PC-9 (cell line): ENCODE measurements at regions of chr6 and their contacts with region 1.

Region 1: GRCh38 chr6:26270903-26271667 is 93.9 kb upstream of the BTN3A2 start:
- DNase-seq: peak; percentile 65 to 80
- H3K4me3 ChIP-seq: peak overlapping the region; percentile 73
- H3K27ac ChIP-seq: peak overlapping the region; percentile 62
- H3K4me1 ChIP-seq: peaks cover 24% of the 10 kb centered on the region
- H3K27me3 ChIP-seq: no peaks in the 10 kb centered on the region
- CTCF ChIP-seq: no peak

Region 2: DNA sequence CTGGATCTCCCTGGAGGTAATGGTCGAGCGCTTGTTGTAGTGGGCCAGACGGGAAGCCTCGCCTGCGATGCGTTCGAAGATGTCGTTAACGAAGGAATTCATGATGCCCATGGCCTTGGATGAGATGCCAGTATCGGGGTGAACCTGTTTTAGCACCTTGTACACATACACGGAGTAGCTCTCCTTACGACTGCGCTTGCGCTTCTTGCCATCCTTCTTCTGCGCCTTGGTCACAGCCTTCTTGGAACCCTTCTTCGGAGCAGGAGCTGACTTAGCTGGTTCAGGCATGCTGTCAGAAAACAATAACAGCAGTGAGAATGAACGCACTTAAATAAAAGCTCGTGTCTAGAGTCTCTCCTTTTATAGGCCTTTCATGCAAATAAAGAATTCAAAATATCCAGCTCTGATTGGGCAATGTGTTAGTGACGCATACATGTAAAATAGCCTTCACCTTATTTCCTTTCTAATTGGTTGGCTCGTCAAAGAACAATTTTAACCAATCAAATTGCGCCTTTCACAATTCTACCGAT is 54.7 kb before region 1 on chr6:
- CTCF ChIA-PET with region 1: no interaction called
- POLR2A ChIA-PET with region 1: interaction called, 134 read pairs
- intact Hi-C with region 1: loop called (anchors 1 kb)
- DNase-seq: peak; percentile 65 to 95
- H3K4me3 ChIP-seq: peak overlapping the region; percentile 72
- H3K27ac ChIP-seq: peak overlapping the region; percentile 80
- H3K4me1 ChIP-seq: 0 out of 2 replicates have a peak, but pooled peaks cover 14% of the 10 kb centered on the region
- H3K27me3 ChIP-seq: no peaks in the 10 kb centered on the region
- CTCF ChIP-seq: no peak

Region 3: DNA sequence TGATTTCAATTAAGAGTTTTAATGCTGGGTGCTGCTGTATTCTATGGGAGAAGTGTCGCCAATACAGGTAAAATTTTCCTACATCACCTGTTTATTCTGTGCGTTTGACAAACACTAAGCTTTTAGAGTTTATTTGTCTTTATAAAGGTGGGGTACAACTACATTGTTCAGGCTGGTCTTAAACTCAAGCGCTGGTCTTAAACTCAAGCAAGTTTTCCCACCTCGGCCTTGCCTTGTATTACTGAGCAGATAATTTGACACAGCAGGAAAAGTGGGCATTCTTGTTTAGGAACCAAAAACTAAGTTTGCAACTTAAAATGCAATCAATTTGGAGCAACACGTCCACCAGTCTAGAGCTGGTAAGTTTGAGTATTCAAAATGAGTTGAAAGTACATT is 19.0 kb before region 1 on chr6:
- CTCF ChIA-PET with region 1: interaction called, 12 read pairs
- POLR2A ChIA-PET with region 1: no interaction called
- intact Hi-C with region 1: no loop called
- DNase-seq: no peak
- H3K4me3 ChIP-seq: no peak overlapping the region
- H3K27ac ChIP-seq: no peak overlapping the region
- H3K4me1 ChIP-seq: no peaks in the 10 kb centered on the region
- H3K27me3 ChIP-seq: no peaks in the 10 kb centered on the region
- CTCF ChIP-seq: no peak

Region 4: GRCh38 chr6:26520853-26521599 is 249.9 kb after region 1 on chr6:
- CTCF ChIA-PET with region 1: no interaction called
- POLR2A ChIA-PET with region 1: interaction called, 19 read pairs
- intact Hi-C with region 1: no loop called
- DNase-seq: peak; percentile 78 to 89
- H3K4me3 ChIP-seq: peak overlapping the region; percentile 85
- H3K27ac ChIP-seq: peak overlapping the region; percentile 93
- H3K4me1 ChIP-seq: peaks cover 29% of the 10 kb centered on the region
- H3K27me3 ChIP-seq: no peaks in the 10 kb centered on the region
- CTCF ChIP-seq: no peak

Region 5: DNA sequence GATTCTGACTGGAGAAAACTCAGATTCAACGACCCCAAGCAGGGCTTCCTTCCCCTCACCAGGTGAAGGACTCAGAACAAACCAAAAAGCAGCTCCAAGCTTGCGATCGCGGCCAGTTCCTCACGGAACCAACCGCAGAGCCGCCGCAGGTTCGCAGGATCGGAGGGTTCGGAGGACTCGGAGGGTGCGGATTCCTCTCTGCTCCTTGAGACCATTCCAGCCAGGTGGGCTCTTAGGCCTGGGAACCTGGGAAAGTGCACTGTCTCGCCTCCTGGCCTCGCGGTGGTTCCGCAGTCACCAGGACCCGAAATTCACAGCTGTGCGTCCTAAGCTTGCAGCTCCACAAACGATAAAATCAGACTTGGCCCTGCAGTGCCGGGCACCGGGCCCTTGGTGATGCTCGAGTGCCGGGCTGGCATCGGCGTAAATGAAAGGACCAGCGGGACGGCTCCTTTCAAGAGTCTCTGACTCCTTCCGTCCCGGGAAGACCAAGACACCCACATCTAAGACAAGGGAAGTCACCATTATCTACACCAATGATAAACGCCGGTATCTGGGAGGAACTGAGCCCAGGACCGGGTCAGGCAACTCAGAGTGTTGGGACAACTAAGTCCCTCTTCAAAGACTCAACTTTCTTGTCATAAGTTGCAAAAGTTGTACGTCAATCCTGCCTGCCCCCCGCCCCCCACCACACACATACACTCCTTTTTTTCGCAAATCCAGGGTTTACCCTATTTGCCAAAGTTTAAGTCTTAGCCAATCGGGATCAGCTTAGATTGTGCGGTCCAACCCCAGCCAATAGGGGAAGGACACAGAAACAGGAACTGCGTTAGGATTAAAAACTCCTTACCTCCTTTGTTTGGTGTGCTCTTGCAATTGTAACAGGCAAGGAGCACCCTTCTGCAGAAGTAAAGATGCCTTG is 906.7 kb after region 1 on chr6:
- CTCF ChIA-PET with region 1: no interaction called
- POLR2A ChIA-PET with region 1: interaction called, 18 read pairs
- intact Hi-C with region 1: no loop called
- DNase-seq: peak; percentile 80 to 88
- H3K4me3 ChIP-seq: peak overlapping the region; percentile 97
- H3K27ac ChIP-seq: peak overlapping the region; percentile 67
- H3K4me1 ChIP-seq: no peaks in the 10 kb centered on the region; the same call in 1 of the 2 replicates
- H3K27me3 ChIP-seq: no peaks in the 10 kb centered on the region
- CTCF ChIP-seq: peak; percentile 67